ENCODE measurements at regions of chr4 and their contacts with region 1.

Region 1: DNA sequence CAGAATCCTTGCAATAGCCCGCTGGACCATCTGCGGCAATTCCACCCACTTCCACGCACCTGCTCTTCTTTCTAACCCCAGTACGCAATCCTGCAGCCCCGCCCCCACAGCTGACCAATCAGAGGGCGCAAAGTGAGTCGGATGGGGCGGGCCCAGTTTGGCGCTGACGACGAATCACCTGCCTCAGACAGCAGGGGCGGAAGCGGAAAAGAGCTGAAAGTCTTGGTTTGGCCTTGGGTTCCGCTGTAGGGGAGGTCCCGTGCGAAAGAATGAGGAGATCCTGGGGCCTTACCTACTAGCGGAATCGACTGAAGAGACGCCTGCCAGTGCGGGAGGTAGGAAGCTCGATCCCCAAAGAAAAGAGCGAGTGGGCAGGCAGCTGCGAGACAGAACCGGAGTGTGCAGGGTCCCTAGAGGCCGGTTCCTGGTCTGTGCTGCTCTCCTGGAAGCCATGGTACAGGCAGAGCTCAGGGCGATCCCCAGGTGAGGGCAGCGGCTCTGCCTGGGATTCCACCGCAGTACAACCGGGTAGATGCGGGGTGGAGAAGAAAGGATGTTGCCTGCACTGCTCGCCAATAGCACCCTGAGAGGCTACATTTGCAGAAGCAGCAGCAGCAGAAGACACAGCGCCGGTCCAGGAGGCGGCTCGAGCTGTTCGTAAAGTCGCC is at the start of gene TMEM184C:
- DNase-seq: peak; percentile 68
- H3K4me3 ChIP-seq: peak within 1 kb of the TSS; percentile 81
- H3K27me3 ChIP-seq: no peaks in the 10 kb centered on the region
- CTCF ChIP-seq: peak; percentile 29
- polyA plus RNA-seq, gene TMEM184C: 27.1 and 35.1 TPM in 2 replicates

Region 2: DNA sequence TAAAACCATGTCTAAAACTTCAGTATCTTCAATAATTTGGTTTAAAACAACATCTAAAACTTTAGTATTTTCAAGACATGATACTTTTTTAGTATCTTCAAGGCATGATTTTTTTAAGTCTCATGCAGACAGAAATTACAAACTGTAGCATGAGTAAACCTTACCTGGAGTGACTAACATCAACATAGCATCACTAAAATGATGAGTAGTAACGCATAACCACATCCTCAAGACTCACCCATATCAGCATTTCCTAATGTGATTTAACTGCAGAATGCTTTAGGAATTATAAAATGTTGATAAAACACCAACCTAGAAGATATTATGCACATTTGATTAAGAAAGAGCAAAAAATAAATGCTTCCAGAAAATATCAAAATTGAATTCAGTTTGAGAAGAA is 156.1 kb before region 1 on chr4:
- CTCF ChIA-PET with region 1: no interaction called
- POLR2A ChIA-PET with region 1: no interaction called
- DNase-seq: no peak
- H3K4me3 ChIP-seq: no peak overlapping the region
- H3K27me3 ChIP-seq: no peaks in the 10 kb centered on the region
- CTCF ChIP-seq: no peak

Region 3: DNA sequence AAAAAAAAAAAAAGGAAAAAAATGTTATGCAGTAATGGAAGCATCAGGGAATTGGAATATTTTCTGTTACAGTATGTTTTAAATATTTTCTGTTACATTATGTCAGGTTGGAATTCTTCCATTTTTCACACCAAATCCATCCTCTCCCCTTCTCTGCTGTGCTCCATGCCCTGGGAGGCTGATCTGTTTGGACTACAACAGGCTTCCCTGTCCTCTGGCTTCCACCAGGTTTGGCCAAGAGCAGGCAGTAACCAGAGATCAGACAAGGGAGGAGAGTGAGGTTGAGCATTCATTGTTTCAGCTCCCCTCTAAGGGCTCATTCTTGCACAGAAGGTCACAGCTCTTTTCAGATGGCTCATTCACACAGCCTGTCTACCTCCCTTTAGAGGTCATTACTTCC is 11.8 kb before region 1 on chr4:
- CTCF ChIA-PET with region 1: interaction called, 11 read pairs
- POLR2A ChIA-PET with region 1: no interaction called
- DNase-seq: no peak
- H3K4me3 ChIP-seq: no peak overlapping the region
- H3K27me3 ChIP-seq: no peaks in the 10 kb centered on the region
- CTCF ChIP-seq: no peak